ENCODE measurements at regions of chr6 and their contacts with region 1.

Region 1: GRCh38 chr6:50681206-50681824 is 32.0 kb upstream of the TFAP2D start:
- DNase-seq: no peak
- CTCF ChIP-seq: no peak

Region 2: DNA sequence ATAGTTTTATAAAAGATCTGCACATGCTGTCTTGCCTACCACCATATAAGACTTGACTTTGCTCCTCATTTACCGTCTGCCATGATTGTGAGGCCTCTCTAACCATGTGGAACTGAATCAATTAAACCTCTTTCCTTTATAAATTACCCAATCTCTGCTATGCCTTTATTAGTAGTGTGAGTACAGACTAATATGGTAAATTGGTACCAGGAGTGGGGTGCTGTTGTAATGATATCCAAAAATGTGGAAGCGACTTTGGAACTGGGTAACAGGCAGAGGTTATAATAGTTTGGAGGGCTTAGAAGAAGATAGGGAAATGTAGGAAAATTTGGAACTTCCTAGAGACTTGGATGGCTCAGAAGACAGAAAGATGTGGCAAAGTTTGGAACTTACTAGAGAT is 32.2 kb before region 1 on chr6:
- CTCF ChIA-PET with region 1: no interaction called
- POLR2A ChIA-PET with region 1: no interaction called
- DNase-seq: no peak
- CTCF ChIP-seq: no peak

Region 3: DNA sequence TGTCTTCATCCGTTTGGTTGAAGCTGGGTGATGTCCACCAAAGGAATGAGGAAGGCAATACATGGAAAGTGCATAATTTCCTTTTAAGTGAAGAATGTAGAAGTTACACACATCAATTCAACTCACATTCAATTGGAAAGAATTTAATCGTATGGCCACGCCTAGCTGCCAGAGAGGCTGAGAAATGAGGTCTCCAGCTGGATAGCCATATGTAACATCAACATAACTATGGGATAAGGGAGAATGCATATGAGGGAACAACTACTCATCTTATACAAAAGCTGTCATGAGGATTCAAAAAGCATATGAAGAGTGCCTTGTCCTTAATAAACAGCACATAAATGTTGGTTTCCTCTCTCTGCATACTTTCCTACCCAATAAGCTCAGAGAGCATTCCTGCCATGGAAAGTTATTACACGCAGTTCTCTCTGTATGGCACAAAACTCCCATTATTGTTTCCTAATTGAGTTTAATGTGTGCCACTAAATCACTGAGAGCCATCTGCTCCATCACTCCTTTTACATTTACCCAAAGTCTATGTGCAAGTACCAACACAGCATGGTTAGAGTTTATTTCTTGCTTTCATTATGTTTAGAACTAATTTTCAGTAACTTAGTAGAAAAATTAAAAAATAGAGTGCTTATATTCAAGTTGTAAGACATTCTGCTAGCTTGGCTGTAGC is 10.6 kb after region 1 on chr6:
- CTCF ChIA-PET with region 1: interaction called, 14 read pairs
- POLR2A ChIA-PET with region 1: no interaction called
- DNase-seq: no peak
- CTCF ChIP-seq: no peak